ENCODE measurements at regions of chr3 and their contacts with region 1.

Region 1: GRCh38 chr3:44198284-44199269 is 43.1 kb upstream of the TOPAZ1 start:
- DNase-seq: peak; percentile 90
- H3K4me3 Mint-ChIP-seq: no peak overlapping the region
- H3K27ac Mint-ChIP-seq: no peak overlapping the region
- H3K4me1 Mint-ChIP-seq: no peaks in the 10 kb centered on the region
- H3K27me3 Mint-ChIP-seq: peaks cover 18% of the 10 kb centered on the region

Region 2: GRCh38 chr3:43855674-43856299 is 342.8 kb before region 1 on chr3:
- intact Hi-C with region 1: loop called (anchors 2 kb)
- DNase-seq: peak; percentile 82
- H3K4me3 Mint-ChIP-seq: no peak overlapping the region
- H3K27ac Mint-ChIP-seq: no peak overlapping the region
- H3K4me1 Mint-ChIP-seq: no peaks in the 10 kb centered on the region
- H3K27me3 Mint-ChIP-seq: peaks cover 16% of the 10 kb centered on the region

Region 3: GRCh38 chr3:44301746-44302145 is 103.2 kb after region 1 on chr3:
- intact Hi-C with region 1: no loop called
- DNase-seq: no peak
- H3K4me3 Mint-ChIP-seq: no peak overlapping the region
- H3K27ac Mint-ChIP-seq: no peak overlapping the region
- H3K4me1 Mint-ChIP-seq: no peaks in the 10 kb centered on the region
- H3K27me3 Mint-ChIP-seq: peaks cover 21% of the 10 kb centered on the region

Measured in activated CD4-positive, alpha-beta T cell treated with anti-CD3 and anti-CD28 coated beads, Interleukin-2, amount 10 ng/mL, durations not matched to agents 24 days and 14 days (primary cell).